MCF 10A (cell line): ENCODE measurements at regions of chr1 and their contacts with region 1.

Region 1: GRCh38 chr1:152654110-152654509 is 9.1 kb upstream of the LCE2D start:
- DNase-seq: peak; percentile 91
- H3K4me3 Mint-ChIP-seq: no peak overlapping the region
- H3K27ac Mint-ChIP-seq: no peak overlapping the region
- H3K4me1 Mint-ChIP-seq: no peaks in the 10 kb centered on the region
- H3K27me3 Mint-ChIP-seq: no peaks in the 10 kb centered on the region
- CTCF ChIP-seq: peak; percentile 87

Region 2: DNA sequence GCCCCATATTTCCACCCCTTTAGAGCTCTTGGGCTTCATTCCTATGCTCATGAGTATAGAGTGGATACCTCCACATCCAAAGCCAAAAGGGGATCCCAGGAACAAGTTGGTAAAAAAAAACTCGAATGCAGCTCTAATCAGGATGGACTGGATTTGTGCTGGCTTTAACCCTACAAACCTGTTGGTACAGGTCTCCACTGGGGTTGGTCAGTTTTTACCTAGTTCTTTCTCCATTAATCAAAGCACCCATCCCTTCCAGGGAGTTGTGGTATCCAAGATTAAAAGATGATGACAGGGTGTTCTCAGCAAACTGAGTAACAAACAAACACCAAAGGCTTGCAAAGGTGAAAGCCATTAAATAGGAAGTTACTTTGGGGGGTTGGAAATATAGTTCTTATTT is 234.2 kb before region 1 on chr1:
- CTCF ChIA-PET with region 1: no interaction called
- POLR2A ChIA-PET with region 1: no interaction called
- intact Hi-C with region 1: no loop called
- DNase-seq: no peak
- H3K4me3 Mint-ChIP-seq: no peak overlapping the region
- H3K27ac Mint-ChIP-seq: no peak overlapping the region
- H3K4me1 Mint-ChIP-seq: no peaks in the 10 kb centered on the region
- H3K27me3 Mint-ChIP-seq: peaks cover 57% of the 10 kb centered on the region
- CTCF ChIP-seq: no peak

Region 3: DNA sequence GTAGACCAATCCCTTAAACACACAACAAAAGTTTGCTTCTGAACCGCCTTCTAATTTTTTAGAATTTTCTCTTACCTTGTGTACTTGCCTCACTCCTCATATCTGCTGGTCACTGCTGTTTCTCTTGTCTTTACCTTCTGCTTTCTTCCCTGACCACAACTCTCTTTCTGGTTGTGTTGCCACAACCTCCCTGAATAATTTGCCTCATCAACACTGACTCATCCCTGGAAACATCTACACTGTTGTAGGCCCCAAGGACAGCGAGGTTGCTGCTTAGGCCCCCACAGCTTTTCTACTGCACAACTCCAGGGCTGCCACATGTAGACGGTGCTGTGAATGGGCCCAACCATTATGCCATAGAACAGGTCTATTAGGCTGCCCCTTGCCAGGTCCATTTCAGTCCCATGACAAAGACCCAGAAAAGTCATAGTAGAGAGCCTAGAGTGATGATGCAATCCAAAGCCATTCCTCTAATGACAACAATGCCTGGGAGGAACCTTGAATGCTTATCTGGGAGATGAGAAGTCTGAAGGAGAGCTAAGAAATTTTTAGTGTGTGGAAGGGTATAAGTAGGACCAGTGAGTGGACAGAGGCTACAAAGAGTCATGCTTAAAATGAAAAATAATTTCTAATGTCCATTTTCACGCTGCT is 180.1 kb before region 1 on chr1:
- CTCF ChIA-PET with region 1: no interaction called
- POLR2A ChIA-PET with region 1: no interaction called
- intact Hi-C with region 1: no loop called
- DNase-seq: peak; percentile 36
- H3K4me3 Mint-ChIP-seq: no peak overlapping the region
- H3K27ac Mint-ChIP-seq: peak overlapping the region; percentile 28
- H3K4me1 Mint-ChIP-seq: peaks cover 15% of the 10 kb centered on the region
- H3K27me3 Mint-ChIP-seq: no peaks in the 10 kb centered on the region
- CTCF ChIP-seq: no peak

Region 4: GRCh38 chr1:152525080-152525641 is 128.9 kb before region 1 on chr1:
- CTCF ChIA-PET with region 1: no interaction called
- POLR2A ChIA-PET with region 1: no interaction called
- intact Hi-C with region 1: no loop called
- DNase-seq: no peak
- H3K4me3 Mint-ChIP-seq: no peak overlapping the region
- H3K27ac Mint-ChIP-seq: no peak overlapping the region
- H3K4me1 Mint-ChIP-seq: no peaks in the 10 kb centered on the region
- H3K27me3 Mint-ChIP-seq: no peaks in the 10 kb centered on the region
- CTCF ChIP-seq: no peak

Region 5: DNA sequence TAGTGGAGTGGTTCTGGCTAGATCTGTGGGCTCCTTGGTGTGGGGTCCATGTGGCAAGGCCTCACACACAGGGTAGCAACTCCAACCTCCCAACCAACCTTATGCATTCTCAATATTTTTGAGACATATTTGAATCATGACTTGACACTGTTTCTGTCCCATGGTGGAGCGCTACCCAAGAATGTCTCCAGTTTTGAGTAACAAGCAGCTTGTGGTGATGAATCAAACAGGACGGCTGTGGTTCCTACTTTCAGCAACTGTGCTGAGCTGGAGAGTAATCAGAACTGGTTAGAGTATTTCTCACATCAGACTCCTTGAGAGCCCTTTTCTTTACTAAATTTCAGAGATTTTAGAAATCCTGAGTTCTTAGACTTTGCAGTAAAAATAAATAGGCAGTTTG is 76.9 kb before region 1 on chr1:
- CTCF ChIA-PET with region 1: interaction called, 15 read pairs
- POLR2A ChIA-PET with region 1: no interaction called
- intact Hi-C with region 1: no loop called
- DNase-seq: no peak
- H3K4me3 Mint-ChIP-seq: no peak overlapping the region
- H3K27ac Mint-ChIP-seq: no peak overlapping the region
- H3K4me1 Mint-ChIP-seq: peaks cover 12% of the 10 kb centered on the region
- H3K27me3 Mint-ChIP-seq: no peaks in the 10 kb centered on the region
- CTCF ChIP-seq: no peak

Region 6: DNA sequence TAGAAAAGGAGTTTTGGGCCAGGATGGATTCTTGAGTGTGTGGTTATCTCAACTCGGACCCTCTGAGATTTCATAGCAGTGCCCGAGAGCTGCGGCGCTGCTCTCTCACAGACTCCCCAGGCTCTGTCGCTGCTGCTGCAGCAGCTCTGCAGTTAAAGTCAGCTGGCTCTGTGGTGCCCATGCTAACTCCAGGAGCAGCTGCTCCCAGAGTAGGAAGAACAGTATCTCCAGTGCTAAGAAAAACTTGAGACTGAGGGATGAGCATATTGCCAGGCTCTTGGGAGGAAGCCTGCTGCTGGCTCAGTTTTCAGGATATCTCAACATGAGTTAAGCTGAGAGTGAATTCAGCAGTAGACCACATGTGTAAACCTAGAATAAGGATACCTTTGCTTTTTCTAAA is 13.5 kb after region 1 on chr1:
- CTCF ChIA-PET with region 1: interaction called, 58 read pairs
- POLR2A ChIA-PET with region 1: interaction called, 3 read pairs
- intact Hi-C with region 1: no loop called
- DNase-seq: no peak
- H3K4me3 Mint-ChIP-seq: no peak overlapping the region
- H3K27ac Mint-ChIP-seq: no peak overlapping the region
- H3K4me1 Mint-ChIP-seq: no peaks in the 10 kb centered on the region
- H3K27me3 Mint-ChIP-seq: peaks cover 17% of the 10 kb centered on the region
- CTCF ChIP-seq: no peak

Region 7: GRCh38 chr1:152745289-152745704 is 91.2 kb after region 1 on chr1:
- CTCF ChIA-PET with region 1: interaction called, 45 read pairs
- POLR2A ChIA-PET with region 1: no interaction called
- intact Hi-C with region 1: no loop called
- DNase-seq: peak; percentile 89
- H3K4me3 Mint-ChIP-seq: no peak overlapping the region
- H3K27ac Mint-ChIP-seq: peak overlapping the region; percentile 71
- H3K4me1 Mint-ChIP-seq: peaks cover 34% of the 10 kb centered on the region
- H3K27me3 Mint-ChIP-seq: no peaks in the 10 kb centered on the region
- CTCF ChIP-seq: no peak

Region 8: DNA sequence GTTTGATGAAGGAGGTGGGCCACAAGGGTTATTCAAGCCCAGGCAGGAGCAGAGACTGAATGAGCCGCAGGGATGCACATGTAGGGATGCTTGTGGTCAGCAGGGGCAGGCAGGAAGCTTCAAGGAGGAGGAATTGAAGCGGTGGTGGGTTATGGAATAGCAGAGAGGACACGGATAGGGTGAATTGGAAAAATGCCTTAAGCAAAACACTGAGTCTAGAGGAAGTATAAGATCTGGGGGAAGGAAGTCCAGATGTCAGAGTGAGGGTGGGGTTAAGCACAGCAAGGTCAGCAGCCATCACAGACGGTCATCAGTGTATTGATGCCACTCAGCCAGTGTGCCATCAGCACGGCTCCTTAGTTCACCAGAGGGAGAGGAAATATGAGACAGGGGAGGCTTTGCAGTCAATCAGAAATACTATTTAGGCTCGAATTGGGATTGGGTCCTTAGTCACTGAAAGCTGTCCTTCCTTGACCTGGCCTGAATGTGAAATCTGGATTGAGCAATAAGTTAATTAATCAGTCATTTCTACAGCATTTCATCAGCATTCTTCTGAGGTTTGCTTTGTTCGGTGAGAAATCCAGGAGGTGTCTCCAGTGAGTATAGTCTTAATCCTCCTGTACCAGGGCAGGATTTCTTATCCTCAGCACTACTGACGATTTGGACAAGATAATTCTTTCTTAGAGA is 114.9 kb after region 1 on chr1:
- CTCF ChIA-PET with region 1: interaction called, 17 read pairs
- POLR2A ChIA-PET with region 1: interaction called, 3 read pairs
- intact Hi-C with region 1: no loop called
- DNase-seq: peak; percentile 63
- H3K4me3 Mint-ChIP-seq: no peak overlapping the region
- H3K27ac Mint-ChIP-seq: peak overlapping the region; percentile 5
- H3K4me1 Mint-ChIP-seq: peaks cover 29% of the 10 kb centered on the region
- H3K27me3 Mint-ChIP-seq: no peaks in the 10 kb centered on the region
- CTCF ChIP-seq: peak; percentile 13

Region 9: DNA sequence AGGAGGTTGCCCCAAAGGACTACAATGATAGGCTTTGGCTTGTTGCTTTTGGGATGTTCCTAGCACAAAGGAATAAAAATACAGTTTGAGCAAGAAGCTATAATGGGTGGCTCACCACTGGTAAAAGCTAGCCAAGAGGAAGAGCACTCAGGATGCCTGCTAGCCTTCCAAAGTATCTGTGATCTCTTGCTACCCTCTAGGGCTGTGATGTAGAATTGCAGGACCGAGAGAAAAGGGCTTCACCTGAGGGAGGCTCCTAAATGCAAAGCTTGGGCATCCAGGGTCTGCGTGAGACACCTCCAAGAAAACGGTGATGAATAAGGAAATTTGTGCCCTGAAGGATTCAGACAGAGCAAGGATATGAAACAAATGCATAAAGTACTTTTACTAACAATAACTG is 272.0 kb after region 1 on chr1:
- CTCF ChIA-PET with region 1: interaction called, 20 read pairs
- POLR2A ChIA-PET with region 1: interaction called, 4 read pairs
- intact Hi-C with region 1: loop called (anchors 1 kb)
- DNase-seq: peak; percentile 82
- H3K4me3 Mint-ChIP-seq: no peak overlapping the region
- H3K27ac Mint-ChIP-seq: no peak overlapping the region
- H3K4me1 Mint-ChIP-seq: peaks cover 11% of the 10 kb centered on the region
- H3K27me3 Mint-ChIP-seq: no peaks in the 10 kb centered on the region
- CTCF ChIP-seq: peak; percentile 98